Heart left ventricle (tissue), 16 donors: ENCODE measurements at regions of chr12 and their contacts with region 1.

Region 1: DNA sequence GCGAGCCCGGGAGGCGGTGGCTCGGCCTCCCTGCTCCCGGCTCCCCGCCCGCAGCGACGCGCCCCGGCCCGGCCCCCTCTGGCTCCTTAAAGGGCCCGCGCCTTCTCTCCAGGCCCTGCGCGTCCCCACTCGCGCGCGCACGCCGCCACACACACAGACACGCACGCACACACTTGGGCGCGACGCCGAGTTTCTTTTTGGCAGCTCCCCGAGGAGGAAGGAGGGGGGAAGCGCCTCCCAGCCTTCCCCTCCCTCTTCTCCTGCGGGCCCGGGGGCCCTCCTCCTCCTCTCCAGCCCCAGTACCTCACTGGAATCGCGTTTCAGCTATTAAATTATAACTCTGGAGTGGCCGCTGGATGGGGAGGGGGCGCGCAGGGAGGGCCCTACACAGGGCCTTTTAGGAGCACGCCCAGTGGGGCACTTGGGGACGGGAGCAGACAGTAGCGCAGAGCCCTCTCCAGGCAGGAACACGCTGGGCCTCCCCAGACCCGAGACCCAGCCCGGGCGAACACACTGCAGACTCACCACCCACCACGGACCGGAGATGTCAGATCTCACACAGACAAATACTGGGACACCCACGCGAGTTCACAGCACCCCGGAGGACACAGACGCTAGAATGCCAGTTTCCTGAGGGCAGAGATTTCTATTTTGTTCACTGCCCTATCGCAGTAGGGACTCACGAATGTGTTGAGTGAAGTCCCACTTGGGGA is 405 bp upstream of the NCOR2 start:
- DNase-seq: peak; percentile 96 to 98 (median 96)
- ATAC-seq: peak; percentile 79 to 90 (median 86)
- H3K4me3 ChIP-seq: peak overlapping the region in 11 of 12 donors; percentile 24 to 99 (median 47)
- H3K27ac ChIP-seq: peak overlapping the region; percentile 66 to 99 (median 92)
- H3K4me1 ChIP-seq: peaks cover 0 to 53% (median 43%) of the 10 kb centered on the region in 12 donors
- H3K27me3 ChIP-seq: no peaks in the 10 kb centered on the region
- CTCF ChIP-seq: peak in 1 of 12 donors; percentile 16
- POLR2A ChIP-seq: no peak

Region 2: DNA sequence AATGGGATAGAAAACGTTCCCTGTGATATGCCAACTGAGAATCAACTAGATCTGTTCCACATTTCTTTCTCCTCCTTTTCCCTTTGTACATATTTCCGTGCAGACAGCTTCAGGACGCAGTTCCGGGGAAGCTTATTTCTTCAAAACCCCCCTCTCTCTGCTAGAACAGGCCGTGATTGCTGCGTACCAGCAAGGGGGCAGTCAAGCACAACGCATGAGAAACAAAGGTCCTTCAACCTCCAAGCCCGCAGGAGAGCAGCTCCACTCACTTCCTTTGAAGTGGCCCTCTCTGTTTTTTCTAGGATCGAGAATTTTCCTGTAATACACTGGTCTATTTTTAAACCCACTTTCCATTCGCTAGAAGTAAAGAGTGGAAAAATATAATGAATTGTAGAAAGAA is 514.0 kb before region 1 on chr12:
- intact Hi-C with region 1: loop called in 1 of 10 experiments (anchors 10 kb)
- DNase-seq: peak in 4 of 5 donors; percentile 50 to 62 (median 58)
- ATAC-seq: peak; percentile 79 to 94 (median 88)
- H3K4me3 ChIP-seq: no peak overlapping the region
- H3K27ac ChIP-seq: no peak overlapping the region
- H3K4me1 ChIP-seq: peaks cover 0 to 17% (median 5%) of the 10 kb centered on the region in 12 donors
- H3K27me3 ChIP-seq: no peaks in the 10 kb centered on the region
- CTCF ChIP-seq: peak; percentile 39 to 82 (median 72)
- POLR2A ChIP-seq: no peak

Region 3: GRCh38 chr12:124379938-124380754 is 187.7 kb before region 1 on chr12:
- intact Hi-C with region 1: loop called in 4 of 10 experiments (anchors 2 to 10 kb)
- DNase-seq: peak; percentile 71 to 85 (median 78)
- ATAC-seq: peak; percentile 36 to 71 (median 54)
- H3K4me3 ChIP-seq: peak overlapping the region in 3 of 12 donors; percentile 3 to 25 (median 23)
- H3K27ac ChIP-seq: peak overlapping the region; percentile 74 to 96 (median 86)
- H3K4me1 ChIP-seq: peaks cover 21 to 70% (median 51%) of the 10 kb centered on the region in 12 donors
- H3K27me3 ChIP-seq: no peaks in the 10 kb centered on the region
- CTCF ChIP-seq: peak; percentile 26 to 80 (median 54)
- POLR2A ChIP-seq: no peak

Region 4: DNA sequence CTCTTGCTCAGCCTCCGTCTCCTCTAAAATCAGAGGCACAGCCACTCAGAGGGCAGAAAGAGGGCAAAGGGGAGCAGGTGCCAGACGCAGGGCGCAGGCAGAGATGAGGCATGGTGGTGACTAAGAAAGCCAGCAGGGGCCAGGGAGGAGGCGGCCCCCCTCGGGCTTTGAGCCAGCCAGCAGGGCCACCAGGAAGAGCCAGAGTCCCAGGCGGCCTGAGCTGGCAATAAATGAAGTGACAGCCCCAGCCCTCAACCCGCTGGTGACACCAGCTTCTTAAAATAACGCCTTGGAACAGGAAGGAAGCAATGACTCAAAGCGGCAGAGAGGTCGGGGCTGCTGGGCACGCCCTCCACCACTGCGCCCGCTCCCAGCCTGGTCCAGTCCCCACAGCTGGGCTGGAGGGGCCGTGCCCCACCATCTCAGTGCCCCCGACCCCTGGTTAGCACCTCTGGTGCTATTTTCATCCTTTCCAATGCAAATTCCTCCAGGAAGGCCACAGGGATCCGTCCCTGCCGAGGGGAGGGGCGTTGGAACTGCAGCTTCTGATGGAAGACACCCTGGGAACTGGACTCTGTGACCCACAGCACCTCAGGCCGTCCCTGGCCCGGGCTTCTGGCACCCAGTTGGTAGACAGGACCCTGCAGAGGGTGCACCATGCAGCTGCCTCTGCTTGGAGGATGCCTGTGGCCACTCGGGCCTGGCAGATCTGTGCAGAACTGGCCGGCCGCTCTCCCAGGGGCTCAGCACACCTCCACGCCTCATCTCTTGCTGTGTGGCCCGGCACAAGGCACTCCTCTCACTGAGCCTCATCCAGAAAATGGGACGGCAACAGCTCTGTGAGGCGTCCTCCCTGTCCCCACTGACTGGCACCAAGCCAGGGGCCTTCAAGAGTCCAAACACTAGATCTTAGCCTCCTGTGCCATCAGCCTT is 114.1 kb before region 1 on chr12:
- intact Hi-C with region 1: loop called in 3 of 10 experiments (anchors 10 kb)
- DNase-seq: peak; percentile 90 to 96 (median 92)
- ATAC-seq: peak; percentile 82 to 90 (median 82)
- H3K4me3 ChIP-seq: peak overlapping the region in 8 of 12 donors; percentile 2 to 38 (median 19)
- H3K27ac ChIP-seq: peak overlapping the region; percentile 37 to 94 (median 90)
- H3K4me1 ChIP-seq: peaks cover 19 to 82% (median 66%) of the 10 kb centered on the region in 12 donors
- H3K27me3 ChIP-seq: no peaks in the 10 kb centered on the region
- CTCF ChIP-seq: peak in 4 of 12 donors; percentile 2 to 31 (median 23)
- POLR2A ChIP-seq: no peak

Region 5: GRCh38 chr12:124625867-124626675 is 58.3 kb after region 1 on chr12:
- intact Hi-C with region 1: loop called in 3 of 10 experiments (anchors 2 to 10 kb)
- DNase-seq: peak; percentile 88 to 94 (median 93)
- ATAC-seq: peak; percentile 83 to 96 (median 94)
- H3K4me3 ChIP-seq: peak overlapping the region in 1 of 12 donors; percentile 6
- H3K27ac ChIP-seq: peak overlapping the region; percentile 63 to 94 (median 86)
- H3K4me1 ChIP-seq: peaks cover 3 to 43% (median 35%) of the 10 kb centered on the region in 12 donors
- H3K27me3 ChIP-seq: no peaks in the 10 kb centered on the region
- CTCF ChIP-seq: no peak
- POLR2A ChIP-seq: peak in 1 of 2 donors; percentile 7

Region 6: GRCh38 chr12:124680863-124681778 is 113.3 kb after region 1 on chr12:
- intact Hi-C with region 1: loop called in 7 of 10 experiments (anchors 2 to 10 kb)
- DNase-seq: peak in 3 of 5 donors; percentile 62 to 86 (median 76)
- ATAC-seq: peak; percentile 27 to 82 (median 60)
- H3K4me3 ChIP-seq: no peak overlapping the region
- H3K27ac ChIP-seq: peak overlapping the region; percentile 11 to 90 (median 80)
- H3K4me1 ChIP-seq: peaks cover 13 to 75% (median 53%) of the 10 kb centered on the region in 12 donors
- H3K27me3 ChIP-seq: no peaks in the 10 kb centered on the region
- CTCF ChIP-seq: peak in 11 of 12 donors; percentile 11 to 48 (median 34)
- POLR2A ChIP-seq: no peak

Region 7: DNA sequence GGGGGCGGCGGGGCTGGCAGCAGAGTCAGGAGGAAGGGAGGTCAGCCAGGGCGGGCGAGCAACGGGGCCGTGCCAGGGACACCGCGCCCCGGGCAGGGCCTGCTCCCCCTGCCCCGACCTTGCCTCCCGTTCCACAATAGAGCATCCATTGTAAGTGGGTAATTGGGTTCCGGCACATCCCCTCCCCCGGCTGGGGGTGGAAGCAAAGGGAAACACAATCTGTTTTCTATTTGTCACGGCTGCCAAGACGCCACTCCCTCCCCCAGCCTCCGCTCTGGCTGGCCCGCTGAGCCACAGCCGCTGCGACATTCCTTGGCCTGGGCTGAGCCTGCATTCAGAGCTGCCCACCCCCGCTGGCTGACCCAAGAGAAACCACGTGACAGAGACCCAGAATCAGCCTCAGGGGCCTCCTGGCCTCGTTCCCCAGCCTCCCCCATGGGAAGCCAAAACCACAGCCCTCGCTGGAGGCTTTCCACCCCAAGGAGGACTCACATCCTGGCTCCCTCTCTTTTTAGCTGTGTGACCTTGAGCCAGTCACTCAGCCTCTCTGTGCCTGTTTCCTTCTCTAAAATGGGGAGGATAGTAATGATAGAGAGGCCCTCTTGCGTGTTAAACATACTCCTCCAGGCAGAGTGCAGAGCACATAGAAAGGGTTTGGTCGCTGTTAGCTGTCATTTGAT is 178.2 kb after region 1 on chr12:
- intact Hi-C with region 1: loop called in 1 of 10 experiments (anchors 5 kb)
- DNase-seq: peak; percentile 94 to 96 (median 96)
- ATAC-seq: peak; percentile 92 to 97 (median 96)
- H3K4me3 ChIP-seq: peak overlapping the region in 4 of 12 donors; percentile 16 to 20 (median 18)
- H3K27ac ChIP-seq: peak overlapping the region; percentile 67 to 93 (median 85)
- H3K4me1 ChIP-seq: peaks cover 4 to 34% (median 13%) of the 10 kb centered on the region in 12 donors
- H3K27me3 ChIP-seq: no peaks in the 10 kb centered on the region
- CTCF ChIP-seq: no peak
- POLR2A ChIP-seq: peak in 1 of 2 donors; percentile 22